ENCODE measurements at regions of chr20 and their contacts with region 1.

Region 1: DNA sequence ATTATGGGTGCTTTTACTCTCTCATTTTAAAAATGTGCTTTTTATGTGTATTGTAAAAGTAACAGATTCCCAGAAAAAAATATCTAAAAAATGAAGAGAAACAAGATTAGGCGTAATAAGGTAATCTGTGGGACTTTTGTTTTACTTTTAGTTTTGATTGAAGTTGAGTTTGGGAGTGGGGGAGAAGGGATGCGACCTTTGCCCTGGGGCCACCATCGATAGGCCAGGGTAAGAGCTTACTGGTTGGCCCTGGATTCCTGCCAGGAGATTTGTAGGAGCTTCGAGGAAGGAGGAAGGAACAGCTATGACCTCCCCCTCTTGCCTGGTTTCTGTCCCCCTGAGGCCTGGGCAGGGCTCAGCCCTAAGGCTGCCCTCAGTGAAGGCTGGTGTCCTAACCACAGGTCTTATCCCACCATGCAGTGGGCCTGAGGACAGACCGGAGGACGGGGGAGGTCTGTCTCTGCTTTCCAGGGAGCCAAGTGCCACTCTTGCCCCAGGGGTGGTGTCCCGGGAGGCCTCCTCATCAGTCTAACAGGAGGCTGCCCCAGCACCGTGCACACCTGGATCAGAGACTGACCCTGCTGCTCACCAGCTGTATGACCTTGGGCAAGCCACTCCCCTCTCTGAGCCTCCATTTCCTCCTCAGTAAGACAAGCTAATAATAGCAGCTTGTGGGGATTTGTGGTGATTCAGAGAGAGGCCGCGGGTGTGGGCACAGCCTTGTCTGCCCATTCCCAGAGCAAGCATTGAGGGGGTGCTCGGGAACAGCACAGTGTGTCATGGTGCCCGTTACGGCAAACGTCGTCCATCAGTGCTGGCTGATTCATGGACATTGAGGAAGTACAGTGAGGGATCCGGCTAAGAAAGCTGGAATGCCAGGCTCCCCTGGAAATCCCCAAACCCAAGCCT is 21.2 kb downstream of the TGM2 start:
- DNase-seq: peak; percentile 90
- H3K4me3 Mint-ChIP-seq: peak overlapping the region; percentile 20
- H3K27ac Mint-ChIP-seq: peak overlapping the region; percentile 94
- H3K4me1 Mint-ChIP-seq: peaks cover 80% of the 10 kb centered on the region
- H3K27me3 Mint-ChIP-seq: no peaks in the 10 kb centered on the region
- CTCF ChIP-seq: no peak

Region 2: DNA sequence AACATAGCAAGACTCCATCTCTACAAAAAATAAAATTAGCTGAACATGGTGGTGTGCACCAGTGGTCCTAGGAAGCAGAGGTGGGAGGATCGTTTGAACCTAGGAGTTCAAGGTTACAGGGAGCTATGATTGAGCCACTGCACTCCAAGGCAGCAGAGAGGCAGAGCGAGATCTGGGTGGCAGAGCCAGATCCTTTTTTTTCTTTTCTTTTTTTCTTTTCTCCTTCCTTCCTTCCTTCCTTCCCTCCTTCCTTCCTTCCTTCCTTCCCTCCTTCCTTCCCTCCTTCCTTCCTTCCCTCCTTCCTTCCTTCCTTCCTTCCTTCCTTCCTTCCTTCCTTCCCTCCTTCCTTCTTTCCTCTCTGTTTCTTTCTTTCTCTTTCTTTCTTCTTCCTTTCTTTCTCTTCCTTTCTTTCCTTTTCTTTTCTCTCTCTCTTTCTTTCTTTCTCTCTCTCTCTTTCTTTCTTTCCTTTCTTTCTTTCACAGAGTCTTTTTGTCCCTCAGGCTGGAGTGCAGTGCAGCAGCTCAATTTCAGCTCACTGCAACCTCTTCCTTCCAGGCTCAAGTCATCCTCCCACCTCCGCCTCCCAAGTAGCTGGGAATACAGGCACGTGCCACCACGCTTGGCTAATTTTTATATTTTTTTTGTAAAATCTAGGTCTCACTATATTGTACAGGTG is 250.2 kb before region 1 on chr20:
- CTCF ChIA-PET with region 1: interaction called, 15 read pairs
- intact Hi-C with region 1: no loop called
- DNase-seq: no peak
- H3K4me3 Mint-ChIP-seq: no peak overlapping the region
- H3K27ac Mint-ChIP-seq: no peak overlapping the region
- H3K4me1 Mint-ChIP-seq: no peaks in the 10 kb centered on the region
- H3K27me3 Mint-ChIP-seq: peaks cover 56% of the 10 kb centered on the region
- CTCF ChIP-seq: no peak

Region 3: DNA sequence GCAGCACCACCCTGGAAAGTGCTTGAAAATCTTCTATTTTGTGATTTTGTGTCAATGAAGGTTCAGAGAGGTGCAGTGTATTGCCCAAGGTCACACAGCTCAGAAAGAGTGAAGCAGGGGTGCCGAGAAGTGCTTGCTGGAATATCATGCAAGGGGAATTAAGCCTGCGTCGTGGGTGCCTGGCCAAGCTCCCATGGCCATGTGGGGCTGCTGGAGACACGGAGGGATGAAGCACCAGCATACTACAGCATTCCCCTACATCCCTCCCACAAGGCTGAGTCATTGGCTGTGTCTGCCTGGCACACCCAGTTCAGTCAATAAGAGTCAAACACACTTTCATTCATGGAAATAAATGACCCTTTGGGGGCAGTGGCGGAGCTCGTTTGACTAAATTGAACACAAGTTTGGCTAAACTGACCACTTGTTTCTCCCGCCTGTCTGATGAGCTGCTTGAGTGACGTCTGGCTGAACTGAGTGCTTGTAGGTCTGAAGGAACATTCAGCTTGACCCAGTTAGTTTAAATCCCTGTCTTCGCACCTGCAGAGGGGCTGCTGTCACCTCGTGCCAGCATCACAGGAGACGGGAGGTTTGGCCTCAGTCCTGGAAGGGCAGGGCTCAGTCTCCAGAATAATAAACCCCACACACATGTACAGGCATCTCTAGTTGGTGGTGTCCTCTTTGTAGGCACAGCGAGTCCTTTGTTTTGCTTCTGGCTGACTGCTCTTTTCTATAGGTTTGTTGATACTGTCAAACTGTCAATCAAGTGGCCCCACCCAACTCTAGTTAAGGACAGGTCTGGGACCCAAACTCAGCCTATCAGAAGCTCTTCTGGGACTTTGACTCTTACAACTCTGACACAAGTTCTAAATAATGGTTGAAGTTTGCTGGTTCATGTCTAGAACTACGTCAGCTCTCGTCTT is 29.6 kb after region 1 on chr20:
- CTCF ChIA-PET with region 1: interaction called, 10 read pairs
- intact Hi-C with region 1: no loop called
- DNase-seq: peak; percentile 93
- H3K4me3 Mint-ChIP-seq: peak overlapping the region; percentile 6
- H3K27ac Mint-ChIP-seq: peak overlapping the region; percentile 86
- H3K4me1 Mint-ChIP-seq: peaks cover 59% of the 10 kb centered on the region
- H3K27me3 Mint-ChIP-seq: no peaks in the 10 kb centered on the region
- CTCF ChIP-seq: no peak